Aorta (tissue), 5 donors: ENCODE measurements at regions of chr12 and their contacts with region 1.

Region 1: GRCh38 chr12:47715393-47715876 is 9.6 kb upstream of the RPAP3 start:
- DNase-seq: peak in 1 of 2 donors; percentile 85
- ATAC-seq: peak; percentile 80
- H3K4me3 ChIP-seq: no peak overlapping the region
- H3K27ac ChIP-seq: no peak overlapping the region
- H3K4me1 ChIP-seq: peaks cover 0 to 3% of the 10 kb centered on the region in 2 donors
- H3K27me3 ChIP-seq: no peaks in the 10 kb centered on the region

Region 2: DNA sequence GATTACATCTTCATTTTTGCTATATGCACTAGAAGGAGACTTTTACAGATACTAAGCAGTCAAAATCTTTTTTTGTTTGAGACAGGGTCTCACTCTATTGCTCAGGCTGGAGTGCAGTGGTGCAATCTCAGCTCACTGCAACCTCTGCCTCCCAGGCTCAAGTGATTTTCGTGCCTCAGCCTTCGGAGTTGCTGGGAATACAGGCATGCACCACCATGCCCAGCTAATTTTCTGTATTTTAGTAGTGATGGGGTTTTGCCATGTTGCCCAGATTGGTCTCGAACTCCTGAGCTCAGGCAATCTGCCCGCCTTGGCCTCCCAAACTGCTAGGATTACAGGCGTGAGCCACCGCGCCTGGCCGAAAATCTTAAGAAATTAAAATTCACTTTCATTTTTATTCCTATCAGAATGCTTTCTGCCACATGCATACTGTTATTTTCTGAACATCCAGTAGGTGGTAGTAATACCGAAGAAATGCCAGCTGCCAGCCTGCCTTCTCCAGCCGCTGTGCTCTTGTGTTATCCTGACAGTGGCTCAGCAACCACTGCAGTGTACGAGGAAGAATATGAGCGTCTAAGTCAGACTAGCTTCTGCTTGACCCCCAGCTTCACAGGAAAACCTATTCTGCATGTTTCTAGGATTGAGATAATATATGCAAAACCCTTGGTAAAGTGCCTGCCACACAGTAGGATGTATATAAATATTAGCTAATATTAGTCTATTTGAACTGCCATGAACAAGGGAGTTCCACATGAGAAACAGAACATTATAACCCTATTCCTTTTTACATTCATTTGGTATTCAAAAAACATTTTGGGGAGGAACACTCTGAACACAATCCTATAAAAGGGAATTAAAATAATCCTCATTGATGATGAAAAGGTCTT is 63.8 kb before region 1 on chr12:
- intact Hi-C with region 1: no loop called
- DNase-seq: peak; percentile 75 to 78
- ATAC-seq: peak; percentile 87
- H3K4me3 ChIP-seq: no peak overlapping the region
- H3K27ac ChIP-seq: no peak overlapping the region
- H3K4me1 ChIP-seq: peaks cover 0 to 3% of the 10 kb centered on the region in 2 donors
- H3K27me3 ChIP-seq: no peaks in the 10 kb centered on the region

Region 3: DNA sequence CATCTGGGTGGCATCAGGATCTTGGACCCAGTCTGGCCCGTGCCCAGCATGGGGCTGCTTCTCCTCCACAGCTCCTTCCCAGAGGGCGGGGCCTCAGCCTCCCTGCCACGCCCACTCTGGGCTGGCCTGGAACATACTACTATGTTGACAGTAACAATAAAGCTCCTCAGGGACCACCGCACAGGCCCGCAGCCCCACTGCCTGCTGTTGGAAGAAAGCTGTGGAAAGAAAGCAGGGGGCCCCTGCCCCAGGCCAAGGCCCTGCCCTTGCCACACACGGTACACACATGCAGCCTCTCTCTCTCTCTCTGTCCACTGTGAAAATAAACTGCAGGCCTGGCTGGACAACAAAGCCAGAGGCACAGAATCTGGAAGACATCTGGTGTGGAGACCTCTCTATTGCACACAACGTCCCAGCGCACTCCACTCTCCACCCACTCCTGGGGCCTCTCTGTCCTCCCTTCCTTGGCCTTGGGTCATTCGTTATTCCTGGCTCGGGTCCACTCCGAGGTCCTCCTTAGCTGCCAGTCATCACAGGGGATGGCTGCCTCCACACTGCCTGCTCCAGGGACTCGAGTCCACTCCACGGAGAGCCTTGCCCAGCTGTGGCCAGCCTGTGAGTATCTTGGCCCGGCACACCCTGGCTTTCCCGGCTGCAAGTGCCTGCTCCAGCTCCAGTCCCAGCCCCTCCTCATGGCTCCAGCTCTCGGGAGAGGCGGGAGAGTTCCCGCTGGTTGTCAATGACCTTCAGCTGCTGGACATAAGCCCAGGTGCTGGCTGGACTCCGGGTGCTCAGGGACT is 21.6 kb after region 1 on chr12:
- intact Hi-C with region 1: loop called in 1 of 2 experiments (anchors 2 kb)
- DNase-seq: peak; percentile 93 to 95
- ATAC-seq: peak; percentile 91
- H3K4me3 ChIP-seq: no peak overlapping the region
- H3K27ac ChIP-seq: peak overlapping the region; percentile 10 to 90
- H3K4me1 ChIP-seq: peaks cover 0 to 1% of the 10 kb centered on the region in 2 donors
- H3K27me3 ChIP-seq: no peaks in the 10 kb centered on the region

Region 4: GRCh38 chr12:47767216-47767724 is 51.8 kb after region 1 on chr12:
- intact Hi-C with region 1: loop called (anchors 2 kb)
- DNase-seq: no peak
- ATAC-seq: no peak
- H3K4me3 ChIP-seq: no peak overlapping the region
- H3K27ac ChIP-seq: no peak overlapping the region
- H3K4me1 ChIP-seq: no peaks in the 10 kb centered on the region
- H3K27me3 ChIP-seq: no peaks in the 10 kb centered on the region

Region 5: GRCh38 chr12:47779301-47779942 is 64.0 kb after region 1 on chr12:
- intact Hi-C with region 1: loop called (anchors 1 to 2 kb)
- DNase-seq: peak; percentile 92 to 97
- ATAC-seq: peak; percentile 88
- H3K4me3 ChIP-seq: no peak overlapping the region
- H3K27ac ChIP-seq: no peak overlapping the region
- H3K4me1 ChIP-seq: peaks cover 0 to 5% of the 10 kb centered on the region in 2 donors
- H3K27me3 ChIP-seq: no peaks in the 10 kb centered on the region

Region 6: DNA sequence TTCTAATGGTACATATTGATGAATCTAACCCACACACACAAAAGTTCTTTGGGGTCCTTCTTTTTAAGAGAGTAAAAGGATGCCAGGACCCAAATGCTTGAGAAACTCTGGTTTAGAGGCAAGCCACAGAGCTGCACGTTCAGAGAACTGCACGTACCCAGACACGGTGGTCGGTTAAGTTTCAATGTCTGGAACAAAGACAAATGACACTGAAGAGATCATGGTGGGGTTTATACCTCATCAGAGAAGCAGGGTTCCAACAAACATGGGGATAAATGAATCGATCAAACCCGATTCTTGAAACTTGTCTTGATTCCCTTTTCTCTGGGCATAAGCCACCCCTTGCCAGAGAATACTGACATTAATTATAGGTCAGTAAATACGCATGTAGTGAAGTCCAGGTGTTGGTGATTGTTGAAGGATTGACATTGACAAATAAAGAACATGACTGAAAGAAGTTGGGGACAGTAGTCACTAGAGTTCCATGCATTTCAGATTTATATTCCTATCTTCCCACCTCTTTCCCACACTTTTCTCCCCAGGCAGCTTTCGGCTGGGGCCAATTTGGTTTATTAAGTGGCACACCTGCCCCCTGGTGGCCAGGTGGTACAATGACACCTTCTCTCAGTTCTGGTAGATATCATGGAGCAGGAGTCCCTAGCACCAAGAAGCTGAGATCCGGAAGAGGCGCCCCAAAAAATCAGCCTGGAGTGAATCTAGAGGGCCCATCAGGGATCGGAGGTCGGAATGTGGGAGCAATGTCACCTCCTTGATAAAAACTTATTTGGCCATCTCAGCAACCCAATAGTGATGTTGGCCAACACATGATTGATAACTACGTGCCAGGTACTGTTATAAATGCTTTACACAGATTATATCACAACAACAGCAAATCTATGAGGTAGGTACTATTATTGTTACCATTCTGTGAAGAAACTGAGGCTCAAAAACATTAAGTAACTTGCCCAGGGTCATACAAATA is 122.0 kb after region 1 on chr12:
- intact Hi-C with region 1: loop called (anchors 1 to 2 kb)
- DNase-seq: peak; percentile 73 to 90
- ATAC-seq: peak; percentile 82
- H3K4me3 ChIP-seq: no peak overlapping the region
- H3K27ac ChIP-seq: no peak overlapping the region
- H3K4me1 ChIP-seq: no peaks in the 10 kb centered on the region
- H3K27me3 ChIP-seq: no peaks in the 10 kb centered on the region

Region 7: GRCh38 chr12:47949441-47950308 is 234.2 kb after region 1 on chr12:
- intact Hi-C with region 1: loop called in 1 of 2 experiments (anchors 10 kb)
- DNase-seq: peak; percentile 86 to 91
- ATAC-seq: peak; percentile 87
- H3K4me3 ChIP-seq: no peak overlapping the region
- H3K27ac ChIP-seq: no peak overlapping the region
- H3K4me1 ChIP-seq: no peaks in the 10 kb centered on the region
- H3K27me3 ChIP-seq: no peaks in the 10 kb centered on the region